ENCODE measurements at regions of chr9 and their contacts with region 1.

Region 1: DNA sequence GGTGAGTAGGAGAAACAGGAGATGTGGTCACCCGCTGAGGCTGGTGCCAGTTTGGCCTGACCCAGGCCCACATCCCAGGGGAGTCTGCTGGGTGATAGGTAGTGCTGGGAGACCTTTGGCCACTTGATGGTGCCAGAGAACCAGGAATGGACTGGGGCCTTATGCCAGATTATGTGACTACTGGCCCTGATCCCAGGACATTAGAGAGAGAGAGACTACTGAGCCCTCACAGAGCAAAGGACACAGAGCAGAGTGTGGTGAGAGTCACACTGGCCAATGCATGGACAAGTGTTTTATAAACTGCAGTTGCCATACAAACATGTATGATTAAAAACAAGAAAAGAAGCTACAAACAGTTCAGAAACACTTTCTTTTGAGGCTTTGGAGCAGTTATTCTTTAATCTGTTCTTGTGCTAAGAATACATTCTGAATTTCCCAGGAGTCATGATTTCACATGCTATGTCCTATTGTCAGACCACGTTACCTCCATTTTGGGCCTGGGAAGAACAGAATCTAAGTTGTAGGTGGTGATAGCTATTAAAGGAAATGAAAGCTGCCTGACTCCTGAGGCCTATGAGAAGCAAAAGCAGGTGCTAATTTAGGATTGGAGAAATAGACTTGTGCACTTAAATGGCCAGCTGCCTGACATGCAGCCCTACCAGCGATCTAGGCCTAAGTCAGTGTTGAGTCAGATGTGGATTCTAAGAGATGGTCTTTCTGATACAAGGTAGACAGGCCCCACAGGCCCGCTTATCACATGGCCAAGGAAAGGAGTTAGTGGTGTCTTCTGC is 32.6 kb upstream of the TMOD1 start:
- DNase-seq: peak; percentile 36 to 95 (median 80)

Region 2: GRCh38 chr9:97411789-97412625 is 56.8 kb before region 1 on chr9 and contains the start of gene TDRD7:
- intact Hi-C with region 1: loop called (anchors 1 kb)
- DNase-seq: peak; percentile 67 to 97 (median 80)

Region 3: GRCh38 chr9:97501177-97501971 is 32.5 kb after region 1 on chr9 and contains the start of gene TMOD1:
- intact Hi-C with region 1: loop called (anchors 2 kb)
- DNase-seq: peak; percentile 52 to 95 (median 68)

Region 4: DNA sequence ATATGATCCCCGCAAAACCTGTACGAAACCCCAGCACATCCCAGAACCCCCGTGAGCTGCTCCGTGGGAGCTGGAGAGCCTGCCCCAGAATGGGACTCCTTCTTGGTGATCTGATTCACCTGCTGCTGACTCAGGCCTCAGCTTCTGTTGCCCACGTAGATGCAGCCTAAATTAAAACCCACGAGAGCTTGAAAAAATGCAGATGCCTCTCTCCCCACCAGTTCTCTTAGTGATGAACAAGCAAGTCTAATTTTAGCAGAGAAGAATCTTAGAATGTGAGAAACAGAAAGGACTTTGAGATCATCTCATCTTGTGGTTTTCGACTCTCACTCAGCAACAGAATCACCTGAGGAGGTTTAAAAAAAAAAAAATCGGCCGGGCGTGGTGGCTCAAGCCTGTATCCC is 90.3 kb after region 1 on chr9:
- intact Hi-C with region 1: no loop called
- DNase-seq: peak in 5 of 10 donors; percentile 33 to 91 (median 61)

Region 5: DNA sequence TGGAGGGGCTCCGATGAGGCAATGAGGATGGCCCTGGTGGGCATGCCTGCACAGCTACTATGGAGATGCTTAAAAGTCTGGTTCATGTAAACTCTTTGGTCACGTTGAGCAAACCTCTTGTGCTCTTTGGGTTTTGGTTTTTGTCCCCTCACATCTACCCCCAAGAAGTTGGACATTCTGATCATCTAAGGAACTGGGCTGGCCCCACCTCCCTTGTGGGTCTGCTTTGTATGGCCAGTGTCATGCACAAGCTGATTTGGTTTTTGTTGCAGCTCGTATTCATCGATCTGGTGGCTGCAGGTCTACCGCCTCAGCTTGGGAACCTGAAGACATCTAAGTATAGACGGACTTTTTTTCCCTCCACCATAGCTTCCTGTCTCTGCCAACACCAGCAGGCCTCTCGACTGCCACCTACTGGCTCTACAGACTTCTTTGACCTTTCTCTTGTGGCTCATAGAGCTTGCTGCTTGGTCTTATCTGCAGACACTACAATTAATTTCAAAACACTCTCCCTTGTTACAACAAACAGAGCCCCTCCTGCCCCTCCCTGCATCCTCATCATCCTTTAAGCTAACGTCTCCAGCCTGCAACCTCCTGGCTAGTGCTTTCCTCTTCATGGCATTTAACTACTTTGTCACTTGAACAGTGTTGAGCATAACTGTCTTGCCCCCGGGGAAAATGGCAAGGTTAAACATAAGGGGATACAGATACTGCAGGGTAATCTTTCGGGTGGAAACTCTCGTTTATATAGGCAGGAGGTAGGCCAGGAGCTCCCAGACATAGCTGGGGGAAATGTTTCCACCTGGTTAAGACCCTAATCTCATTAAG is 129.8 kb after region 1 on chr9:
- intact Hi-C with region 1: loop called (anchors 1 kb)
- DNase-seq: peak in 8 of 10 donors; percentile 53 to 94 (median 74)

Region 6: GRCh38 chr9:97615439-97616072 is 146.7 kb after region 1 on chr9:
- intact Hi-C with region 1: loop called (anchors 1 kb)
- DNase-seq: peak in 5 of 10 donors; percentile 63 to 80 (median 68)